Endothelial cell of umbilical vein (primary cell): ENCODE measurements at regions of chr1 and their contacts with region 1.

Region 1: DNA sequence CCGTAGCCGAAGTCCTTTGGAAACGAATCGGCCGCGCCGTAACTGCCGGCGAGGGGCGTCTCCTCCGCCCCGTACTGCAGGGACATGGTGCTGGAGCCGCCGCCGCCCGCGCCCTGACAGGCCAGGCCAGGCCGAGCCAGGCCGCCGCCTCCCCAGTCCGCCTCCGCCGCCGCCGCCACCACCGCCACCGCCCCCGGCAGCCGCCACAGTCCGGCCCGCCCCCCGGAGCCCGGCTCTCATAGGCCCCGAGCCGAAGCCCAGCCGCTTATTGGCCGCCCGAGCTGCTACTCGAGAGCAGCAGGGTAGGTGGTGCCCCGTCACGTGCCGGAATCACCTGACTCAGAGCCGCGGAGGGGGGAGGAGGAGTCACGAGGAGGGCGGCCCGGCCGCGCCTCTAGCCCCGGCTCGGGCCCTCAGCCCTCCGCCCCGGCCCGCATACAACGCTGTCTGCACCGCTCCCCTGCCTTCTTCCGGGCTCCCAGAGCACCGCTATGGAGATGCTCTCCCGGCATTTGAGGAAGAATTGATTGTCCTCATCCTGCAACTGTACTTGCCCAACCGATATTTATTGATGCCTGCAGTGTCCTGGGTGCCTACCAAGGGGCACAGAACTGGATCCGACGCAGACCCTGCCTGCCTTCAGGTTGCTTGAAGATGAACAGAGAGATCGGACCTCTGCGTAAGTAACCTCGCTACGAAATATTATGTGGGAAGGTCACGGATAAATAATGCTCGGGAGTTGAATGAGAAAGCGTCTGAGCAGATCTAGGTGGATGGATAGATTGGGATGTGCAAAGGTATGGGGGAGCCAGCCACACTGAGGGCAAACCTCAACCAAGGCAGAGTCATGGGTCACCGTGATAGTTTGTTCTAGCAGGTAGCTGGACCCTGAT is at the start of gene RRAGC:
- DNase-seq: peak; percentile 97
- H3K4me3 ChIP-seq: peak within 1 kb of the TSS; percentile 74 to 88 (median 87)
- H3K27ac ChIP-seq: peak within 1 kb of the TSS; percentile 36
- H3K4me1 ChIP-seq: peaks cover 5% of the 10 kb centered on the region
- H3K27me3 ChIP-seq: no peaks in the 10 kb centered on the region
- CTCF ChIP-seq: no peak
- POLR2A ChIP-seq: peak; percentile 57
- total RNA-seq, gene RRAGC: 33.2 and 40.1 TPM in 2 replicates

Region 2: DNA sequence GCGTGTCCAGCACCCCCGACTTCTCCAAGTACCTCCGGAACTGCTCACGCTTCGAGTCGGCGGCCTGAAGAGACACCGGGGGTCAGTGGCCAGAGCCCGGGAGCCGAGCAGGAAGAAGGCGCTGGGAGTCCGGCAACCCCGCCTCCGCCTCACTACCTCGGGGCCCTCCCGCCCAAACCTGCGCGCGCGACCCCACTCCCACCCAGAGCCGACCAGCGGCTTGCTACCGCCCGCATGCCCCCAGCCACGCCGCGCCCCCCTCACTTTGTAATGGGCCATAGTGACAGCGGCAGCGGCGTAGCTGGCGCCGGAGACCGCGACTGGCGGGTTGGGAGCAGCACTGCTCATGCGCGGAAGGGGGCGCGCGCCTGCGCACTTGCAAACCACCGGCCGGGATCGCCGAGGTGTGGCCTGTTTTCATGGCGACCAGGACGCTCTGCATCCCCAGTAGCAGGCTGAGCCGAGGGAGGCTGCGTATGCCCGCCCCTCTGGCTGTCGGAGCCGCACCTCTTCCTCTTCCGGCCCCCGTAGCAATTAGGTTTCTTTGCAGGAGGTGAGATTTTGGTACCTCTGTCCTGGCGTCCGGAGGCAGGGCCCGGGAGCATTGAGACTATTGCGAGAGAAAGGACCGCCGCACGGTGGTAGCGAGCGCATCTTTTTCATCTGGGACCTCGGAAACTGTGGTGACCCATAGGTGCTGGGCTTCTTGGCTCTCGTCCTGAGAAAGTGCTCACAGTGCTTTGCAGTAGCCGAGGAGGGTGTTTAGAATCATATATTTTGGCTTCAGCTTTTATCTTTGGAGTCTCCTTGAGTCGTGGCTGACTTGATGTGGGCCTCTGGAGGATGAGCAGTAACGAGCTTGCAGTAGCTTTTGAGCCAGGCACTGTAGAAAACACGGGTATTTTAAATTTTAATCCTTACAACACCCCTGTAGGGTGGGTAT is 13.5 kb after region 1 on chr1 and contains the start of gene MYCBP:
- CTCF ChIA-PET with region 1: no interaction called
- POLR2A ChIA-PET with region 1: no interaction called
- dilution Hi-C with region 1: no loop called
- intact Hi-C with region 1: loop called (anchors 1 kb)
- DNase-seq: peak; percentile 98
- H3K4me3 ChIP-seq: peak within 1 kb of the TSS; percentile 74 to 86 (median 83)
- H3K27ac ChIP-seq: peak within 1 kb of the TSS; percentile 12
- H3K4me1 ChIP-seq: peaks cover 12% of the 10 kb centered on the region
- H3K27me3 ChIP-seq: no peaks in the 10 kb centered on the region
- CTCF ChIP-seq: no peak
- POLR2A ChIP-seq: peak; percentile 89
- total RNA-seq, gene MYCBP: 13.1 and 23.1 TPM in 2 replicates

Region 3: GRCh38 chr1:38990738-38991639 is 131.2 kb after region 1 on chr1 and contains the start of gene AKIRIN1:
- CTCF ChIA-PET with region 1: no interaction called
- POLR2A ChIA-PET with region 1: no interaction called
- dilution Hi-C with region 1: no loop called
- intact Hi-C with region 1: loop called (anchors 1 kb)
- DNase-seq: peak; percentile 97
- H3K4me3 ChIP-seq: peak within 1 kb of the TSS; percentile 67 to 83 (median 82)
- H3K27ac ChIP-seq: peak within 1 kb of the TSS; percentile 85
- H3K4me1 ChIP-seq: peaks cover 27% of the 10 kb centered on the region
- H3K27me3 ChIP-seq: no peaks in the 10 kb centered on the region
- CTCF ChIP-seq: no peak
- POLR2A ChIP-seq: peak; percentile 95
- total RNA-seq, gene AKIRIN1: 43.4 and 49.3 TPM in 2 replicates

Region 4: GRCh38 chr1:39026051-39026865 is 166.5 kb after region 1 on chr1 and contains the start of gene NDUFS5:
- CTCF ChIA-PET with region 1: no interaction called
- POLR2A ChIA-PET with region 1: no interaction called
- dilution Hi-C with region 1: no loop called
- intact Hi-C with region 1: loop called (anchors 1 kb)
- DNase-seq: peak; percentile 88
- H3K4me3 ChIP-seq: peak within 1 kb of the TSS; percentile 45 to 86 (median 60)
- H3K27ac ChIP-seq: peak within 1 kb of the TSS; percentile 89
- H3K4me1 ChIP-seq: peaks cover 7% of the 10 kb centered on the region
- H3K27me3 ChIP-seq: no peaks in the 10 kb centered on the region
- CTCF ChIP-seq: no peak
- POLR2A ChIP-seq: peak; percentile 95
- total RNA-seq, gene NDUFS5: 325 and 327 TPM in 2 replicates

Region 5: GRCh38 chr1:39091845-39092645 is 232.2 kb after region 1 on chr1:
- CTCF ChIA-PET with region 1: interaction called, 5 read pairs
- POLR2A ChIA-PET with region 1: no interaction called
- dilution Hi-C with region 1: no loop called
- intact Hi-C with region 1: loop called (anchors 2 kb)
- DNase-seq: peak; percentile 76
- H3K4me3 ChIP-seq: no peak overlapping the region
- H3K27ac ChIP-seq: no peak overlapping the region
- H3K4me1 ChIP-seq: no peaks in the 10 kb centered on the region
- H3K27me3 ChIP-seq: no peaks in the 10 kb centered on the region
- CTCF ChIP-seq: peak; percentile 64
- POLR2A ChIP-seq: no peak

Region 6: GRCh38 chr1:39204441-39205081 is 344.8 kb after region 1 on chr1 and contains the start of gene MACF1:
- CTCF ChIA-PET with region 1: no interaction called
- POLR2A ChIA-PET with region 1: no interaction called
- dilution Hi-C with region 1: no loop called
- intact Hi-C with region 1: loop called (anchors 10 kb)
- DNase-seq: peak; percentile 93
- H3K4me3 ChIP-seq: peak within 1 kb of the TSS; percentile 2 to 66 (median 7)
- H3K27ac ChIP-seq: peak within 1 kb of the TSS; percentile 86
- H3K4me1 ChIP-seq: peaks cover 37% of the 10 kb centered on the region
- H3K27me3 ChIP-seq: no peaks in the 10 kb centered on the region
- CTCF ChIP-seq: peak; percentile 39 to 55
- POLR2A ChIP-seq: no peak
- total RNA-seq, gene MACF1: 566 and 587 TPM in 2 replicates

Region 7: DNA sequence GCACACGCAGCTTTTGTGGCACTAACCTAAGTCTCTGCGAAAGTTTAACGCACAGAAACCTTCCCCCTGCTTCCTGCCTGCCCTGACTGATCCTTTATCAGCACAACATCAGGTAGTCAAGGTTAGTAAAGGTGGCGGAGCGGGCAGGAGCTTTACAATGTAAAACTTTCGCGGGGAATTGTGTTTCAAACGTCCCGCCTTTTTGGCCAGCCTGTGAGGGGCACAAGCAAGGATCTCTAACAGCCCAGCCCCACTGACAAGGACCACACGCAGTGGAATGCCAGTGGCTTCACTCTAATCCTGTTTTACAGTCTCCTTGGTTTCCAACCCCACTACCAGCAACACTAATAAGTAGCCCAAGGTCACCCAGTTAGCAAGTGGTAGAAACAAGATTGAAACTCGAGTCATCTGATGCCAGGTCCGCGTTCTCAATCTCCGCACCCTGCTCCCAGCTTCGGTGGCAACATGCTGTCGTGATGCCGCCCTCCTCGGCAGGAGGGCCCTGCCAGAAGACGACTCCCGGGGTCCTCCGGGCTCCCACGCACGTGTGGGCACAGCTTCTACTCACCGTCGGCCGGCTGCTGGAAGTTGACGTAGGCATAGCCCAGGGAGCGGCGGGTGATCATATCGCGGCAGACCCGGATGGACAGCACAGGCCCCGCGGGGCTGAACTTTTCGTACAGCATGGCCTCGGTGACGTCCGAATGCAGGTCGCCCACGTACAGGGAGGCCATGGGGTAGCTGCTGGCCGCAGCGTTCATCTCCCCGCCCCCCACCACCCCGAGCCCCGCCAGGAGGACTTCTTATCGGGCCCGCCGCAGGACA is 715.6 kb after region 1 on chr1:
- CTCF ChIA-PET with region 1: no interaction called
- POLR2A ChIA-PET with region 1: no interaction called
- dilution Hi-C with region 1: no loop called
- intact Hi-C with region 1: loop called (anchors 10 kb)
- DNase-seq: peak; percentile 49
- H3K4me3 ChIP-seq: peak overlapping the region; percentile 5 to 94 (median 80)
- H3K27ac ChIP-seq: peak overlapping the region; percentile 67
- H3K4me1 ChIP-seq: peaks cover 27% of the 10 kb centered on the region
- H3K27me3 ChIP-seq: no peaks in the 10 kb centered on the region
- CTCF ChIP-seq: no peak
- POLR2A ChIP-seq: no peak